ENCODE measurements at regions of chr10 and their contacts with region 1.

Region 1: DNA sequence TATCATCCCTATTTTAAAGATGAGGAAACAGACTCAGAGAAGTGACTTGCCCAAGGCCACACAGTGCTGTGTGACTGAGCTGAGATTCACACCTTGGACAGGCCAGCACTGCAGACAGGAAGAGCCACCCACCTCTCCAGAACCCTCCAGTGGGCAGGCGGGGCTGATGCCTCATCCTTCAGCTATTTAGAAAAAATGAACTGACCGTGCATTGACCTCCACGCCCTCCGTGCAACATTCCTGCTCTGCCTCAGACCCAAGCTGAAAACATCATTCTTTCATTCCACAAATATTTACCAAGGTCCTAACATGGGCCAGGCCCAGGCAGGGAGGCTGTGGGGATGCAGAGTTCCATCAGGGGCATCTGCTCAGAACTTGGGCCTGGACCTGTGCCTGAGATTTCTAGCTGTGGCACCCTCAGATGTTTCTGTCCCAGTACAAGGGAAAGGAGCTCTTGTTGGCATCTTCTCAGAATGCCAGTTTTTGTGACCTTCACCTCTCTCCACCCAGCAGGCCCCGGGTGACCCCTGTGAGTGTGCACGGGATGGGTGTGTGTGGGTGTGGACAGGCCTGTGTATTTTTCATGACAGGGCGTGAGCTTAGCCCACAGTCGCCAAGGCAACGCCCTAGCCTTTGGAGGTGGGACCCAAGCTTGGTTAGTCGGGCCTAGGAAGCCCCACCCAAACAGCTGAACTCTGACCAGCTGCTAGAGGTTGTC is 6.5 kb downstream of the VSIR start:
- DNase-seq: peak; percentile 95 to 99
- H3K4me3 ChIP-seq: peak overlapping the region; percentile 28; the same call in 1 of the 2 replicates
- H3K27ac ChIP-seq: peak overlapping the region; percentile 88
- H3K4me1 ChIP-seq: peaks cover 91% of the 10 kb centered on the region
- H3K27me3 ChIP-seq: no peaks in the 10 kb centered on the region
- CTCF ChIP-seq: no peak

Region 2: GRCh38 chr10:70982443-70982842 is 784.4 kb before region 1 on chr10:
- CTCF ChIA-PET with region 1: no interaction called
- POLR2A ChIA-PET with region 1: no interaction called
- intact Hi-C with region 1: no loop called
- DNase-seq: no peak
- H3K4me3 ChIP-seq: no peak overlapping the region
- H3K27ac ChIP-seq: no peak overlapping the region
- H3K4me1 ChIP-seq: no peaks in the 10 kb centered on the region
- H3K27me3 ChIP-seq: peaks cover 38% of the 10 kb centered on the region
- CTCF ChIP-seq: no peak

Region 3: DNA sequence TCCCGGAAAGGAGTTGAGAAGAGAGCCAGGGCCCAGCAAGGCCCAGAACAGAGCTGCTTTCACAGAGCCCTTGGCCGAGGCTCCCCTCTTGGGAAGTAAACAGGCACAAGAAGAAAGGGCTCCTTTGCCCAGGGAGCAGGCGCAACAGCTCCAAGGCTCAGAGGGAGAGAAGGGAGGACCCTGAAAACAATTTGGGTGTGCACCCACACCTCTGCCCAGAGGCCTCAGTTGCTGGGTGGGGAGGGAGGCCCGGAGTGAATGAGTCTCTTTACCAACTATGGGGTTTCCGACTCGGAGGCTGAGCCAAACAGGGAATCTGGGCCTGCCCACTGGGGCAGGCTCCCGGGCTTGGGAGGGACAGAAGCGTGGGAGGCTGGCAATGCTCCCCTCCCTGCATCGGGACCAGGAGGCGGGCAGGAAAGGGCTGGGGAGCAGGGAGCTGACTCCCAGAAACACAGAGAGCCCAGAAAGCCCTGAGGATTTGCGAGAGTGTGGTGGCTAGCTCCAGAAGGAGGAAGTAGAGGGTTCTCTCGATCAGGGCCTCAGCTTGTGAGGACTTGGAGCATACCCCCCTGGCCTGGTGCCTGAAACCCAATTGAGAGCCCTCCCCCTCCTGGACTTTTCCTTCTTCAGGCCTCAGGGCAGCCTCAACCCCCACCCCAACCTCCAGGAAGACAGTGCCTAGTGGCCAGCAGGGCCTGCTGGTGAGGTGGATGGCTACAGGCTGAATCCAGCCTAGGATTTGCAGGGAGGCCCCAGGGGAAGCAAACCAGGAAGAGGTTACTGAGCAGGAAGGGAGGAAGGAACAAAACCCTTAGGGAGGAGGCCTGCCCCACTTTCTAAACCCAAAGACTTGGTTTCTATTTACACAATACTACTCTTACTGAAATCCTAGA is 53.5 kb before region 1 on chr10:
- CTCF ChIA-PET with region 1: interaction called, 7 read pairs
- POLR2A ChIA-PET with region 1: interaction called, 6 read pairs
- intact Hi-C with region 1: loop called (anchors 1 kb)
- DNase-seq: peak; percentile 66 to 77
- H3K4me3 ChIP-seq: no peak overlapping the region
- H3K27ac ChIP-seq: peak overlapping the region; percentile 50
- H3K4me1 ChIP-seq: peaks cover 20% of the 10 kb centered on the region
- H3K27me3 ChIP-seq: no peaks in the 10 kb centered on the region
- CTCF ChIP-seq: no peak; the same call in 1 of the 2 replicates

Region 4: GRCh38 chr10:71835671-71836595 is 69.1 kb after region 1 on chr10:
- CTCF ChIA-PET with region 1: no interaction called
- POLR2A ChIA-PET with region 1: no interaction called
- intact Hi-C with region 1: loop called (anchors 2 kb)
- DNase-seq: peak in 1 of 2 experiments; percentile 28
- H3K4me3 ChIP-seq: no peak overlapping the region
- H3K27ac ChIP-seq: no peak overlapping the region
- H3K4me1 ChIP-seq: peaks cover 52% of the 10 kb centered on the region
- H3K27me3 ChIP-seq: no peaks in the 10 kb centered on the region
- CTCF ChIP-seq: no peak

Region 5: DNA sequence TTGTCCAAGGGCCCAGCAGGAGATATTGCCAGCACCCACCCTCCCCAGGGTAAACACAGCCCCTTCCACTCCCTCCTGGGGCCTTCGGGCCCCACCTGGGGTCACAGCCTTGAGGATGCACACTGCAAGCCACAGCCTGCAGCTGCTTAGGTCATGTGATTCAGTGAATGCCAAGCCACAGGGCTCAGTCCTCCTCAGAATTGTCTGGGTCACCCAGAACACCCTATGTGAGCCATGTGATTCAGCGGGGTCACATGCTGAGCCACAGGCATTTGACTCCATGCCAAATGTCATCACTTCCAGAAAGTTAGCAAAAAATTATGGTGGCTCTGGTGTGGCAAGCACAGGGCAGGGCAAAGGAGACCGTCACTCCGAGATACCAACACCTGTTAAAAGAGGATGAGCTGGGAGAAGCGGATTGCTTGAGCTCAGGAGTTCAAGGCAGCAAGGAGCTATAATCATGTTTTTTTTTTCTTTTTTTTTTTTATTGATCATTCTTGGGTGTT is 101.4 kb after region 1 on chr10:
- CTCF ChIA-PET with region 1: no interaction called
- POLR2A ChIA-PET with region 1: interaction called, 3 read pairs
- intact Hi-C with region 1: loop called (anchors 2 kb)
- DNase-seq: peak; percentile 92 to 95
- H3K4me3 ChIP-seq: no peak overlapping the region
- H3K27ac ChIP-seq: peak overlapping the region; percentile 70
- H3K4me1 ChIP-seq: peaks cover 59% of the 10 kb centered on the region
- H3K27me3 ChIP-seq: no peaks in the 10 kb centered on the region
- CTCF ChIP-seq: no peak